Right lobe of liver (tissue), 6 donors: ENCODE measurements at regions of chr15 and their contacts with region 1.

Region 1: GRCh38 chr15:99104788-99105513 is at the start of gene SYNM:
- DNase-seq: peak; percentile 75 to 77 (median 77)
- ATAC-seq: peak; percentile 92 to 95 (median 94)
- H3K4me3 ChIP-seq: peak within 1 kb of the TSS; percentile 43 to 57 (median 49)
- H3K27ac ChIP-seq: peak within 1 kb of the TSS in 2 of 3 donors; percentile 18 to 58
- H3K4me1 ChIP-seq: peaks cover 0 to 9% (median 0%) of the 10 kb centered on the region in 4 donors
- H3K27me3 ChIP-seq: no peaks in the 10 kb centered on the region
- CTCF ChIP-seq: peak; percentile 79 to 92 (median 87)
- POLR2A ChIP-seq: peak; percentile 31
- total RNA-seq, gene SYNM: 1.6 to 3.5 (median 2.9) TPM

Region 2: DNA sequence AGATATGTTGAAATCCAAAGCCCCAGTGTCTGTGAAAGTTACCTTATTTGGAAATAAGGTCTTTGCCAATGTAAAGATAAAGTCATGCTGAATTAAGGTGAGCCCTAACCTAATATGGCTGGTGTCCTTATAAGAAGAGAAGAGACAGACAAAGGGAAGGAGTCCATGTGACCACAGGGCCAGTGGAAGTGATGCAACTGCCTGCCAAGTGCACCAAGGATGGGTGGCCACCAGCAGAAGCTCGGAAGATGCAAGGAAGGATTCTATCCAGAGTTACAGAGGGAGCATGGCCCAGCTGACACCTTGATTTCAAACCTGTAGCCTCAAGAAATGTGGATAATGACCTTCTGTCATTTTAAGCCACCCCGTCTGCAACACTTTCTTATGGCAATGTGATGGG is 62.1 kb before region 1 on chr15:
- intact Hi-C with region 1: no loop called
- DNase-seq: no peak
- ATAC-seq: no peak
- H3K4me3 ChIP-seq: no peak overlapping the region
- H3K27ac ChIP-seq: no peak overlapping the region
- H3K4me1 ChIP-seq: no peaks in the 10 kb centered on the region
- H3K27me3 ChIP-seq: no peaks in the 10 kb centered on the region
- CTCF ChIP-seq: no peak
- POLR2A ChIP-seq: no peak

Region 3: DNA sequence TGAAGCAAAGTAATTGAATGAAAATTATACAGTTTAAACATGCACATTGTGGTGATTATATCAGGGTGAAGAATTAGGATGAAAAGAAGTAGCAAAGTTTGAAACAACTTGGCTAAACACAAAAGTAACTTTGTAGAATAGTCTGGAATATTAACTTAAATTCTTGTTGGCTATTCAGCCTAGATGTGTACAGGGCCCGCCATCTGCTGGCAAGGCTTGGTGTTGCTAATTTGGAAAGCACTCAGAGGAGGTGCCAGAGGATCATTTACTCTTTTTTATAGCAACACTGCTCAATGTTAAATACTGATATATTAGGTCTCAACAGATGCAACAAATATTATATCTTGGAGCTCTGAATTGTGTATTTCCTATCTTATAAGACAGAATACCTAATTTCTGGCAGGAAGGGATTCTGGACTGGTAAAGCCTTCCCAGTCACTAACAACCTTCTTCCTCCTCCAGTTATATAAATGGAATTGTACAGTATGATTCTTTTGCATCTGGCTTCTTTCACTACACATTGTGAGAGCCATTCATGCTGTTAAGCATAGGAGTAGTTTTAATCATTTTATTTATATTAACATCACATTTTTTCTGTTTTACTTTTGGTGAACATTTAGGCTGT is 108.3 kb after region 1 on chr15:
- intact Hi-C with region 1: loop called (anchors 5 kb)
- DNase-seq: peak; percentile 73 to 77 (median 75)
- ATAC-seq: peak; percentile 92 to 97 (median 94)
- H3K4me3 ChIP-seq: no peak overlapping the region
- H3K27ac ChIP-seq: no peak overlapping the region
- H3K4me1 ChIP-seq: no peaks in the 10 kb centered on the region
- H3K27me3 ChIP-seq: no peaks in the 10 kb centered on the region
- CTCF ChIP-seq: peak; percentile 88 to 94 (median 90)
- POLR2A ChIP-seq: no peak